ENCODE measurements at regions of chr7 and their contacts with region 1.

Region 1: DNA sequence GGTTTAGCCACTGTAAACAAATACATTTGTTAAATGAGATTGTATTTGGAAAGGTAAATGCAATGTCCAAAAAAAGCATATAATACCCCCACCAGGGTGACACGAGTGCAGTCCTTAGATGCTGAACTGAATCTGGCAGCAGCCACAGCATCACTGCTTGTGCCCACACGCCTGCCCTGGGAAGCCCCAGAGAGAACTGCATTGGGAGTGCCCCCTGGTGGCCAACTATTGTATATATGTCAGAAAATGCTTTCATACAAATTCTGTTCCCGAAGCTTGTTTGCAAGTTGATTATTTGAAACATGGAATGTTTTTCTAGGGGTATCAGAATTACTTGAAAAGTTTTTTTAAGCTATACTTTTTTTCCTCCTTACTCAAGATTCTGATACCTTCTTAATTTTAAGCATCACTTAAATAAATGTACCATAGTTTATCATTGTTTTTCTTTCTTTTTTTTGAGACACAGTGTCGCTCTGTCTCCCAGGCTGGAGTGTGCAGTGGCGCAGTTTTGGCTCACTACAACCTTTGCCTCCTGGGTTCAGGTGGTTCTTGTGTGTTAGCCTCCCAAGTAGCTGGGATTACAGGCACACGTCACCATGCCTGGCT is 50.1 kb downstream of the LANCL2 start:
- DNase-seq: peak; percentile 82
- H3K4me3 ChIP-seq: no peak overlapping the region
- H3K27ac ChIP-seq: no peak overlapping the region
- H3K4me1 ChIP-seq: no peaks in the 10 kb centered on the region
- H3K27me3 ChIP-seq: no peaks in the 10 kb centered on the region
- CTCF ChIP-seq: peak; percentile 80 to 86 (median 84)
- EP300 ChIP-seq: no peak
- POLR2A ChIP-seq: no peak

Region 2: GRCh38 chr7:54758702-54759592 is 656.3 kb before region 1 on chr7 and contains the start of gene SEC61G:
- in situ Hi-C with region 1: loop called in 2 of 4 experiments (anchors 25 kb)
- intact Hi-C with region 1: no loop called
- DNase-seq: peak; percentile 98
- H3K4me3 ChIP-seq: peak within 1 kb of the TSS; percentile 68 to 97 (median 94)
- H3K27ac ChIP-seq: peak within 1 kb of the TSS; percentile 86 to 91 (median 90)
- H3K4me1 ChIP-seq: peaks cover 6 to 35% (median 31%) of the 10 kb centered on the region in 4 donors
- H3K27me3 ChIP-seq: no peaks in the 10 kb centered on the region
- CTCF ChIP-seq: peak in 1 of 5 experiments; percentile 8
- EP300 ChIP-seq: no peak
- POLR2A ChIP-seq: peak; percentile 89
- total RNA-seq, gene SEC61G: 33.6 to 247 (median 134) TPM

Region 3: DNA sequence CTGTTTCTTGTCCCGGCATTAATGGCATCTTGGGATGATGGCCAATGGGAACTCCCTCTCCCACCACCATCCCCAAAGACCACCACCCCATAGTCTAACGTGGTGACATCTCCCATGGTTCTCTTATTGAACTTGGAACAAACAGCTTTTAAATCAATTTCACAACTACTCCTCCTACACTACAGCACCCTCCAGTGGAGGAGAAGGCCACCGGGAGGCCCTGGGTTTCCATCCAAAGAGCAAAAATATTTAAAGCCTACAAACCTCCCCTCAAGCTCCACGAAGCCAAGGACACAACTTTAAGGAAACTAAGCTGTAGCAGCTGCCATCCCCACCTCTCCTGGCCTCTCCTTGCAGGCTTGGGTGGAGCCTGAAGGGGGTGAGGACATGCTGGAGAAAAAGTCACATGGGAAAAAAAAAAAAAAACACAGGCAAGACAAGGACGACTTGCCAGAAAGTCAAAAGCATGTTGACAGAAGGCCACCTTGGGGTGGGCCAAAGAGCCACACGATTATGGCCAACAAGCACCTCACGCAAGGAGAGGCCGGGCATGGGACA is 144.1 kb before region 1 on chr7:
- in situ Hi-C with region 1: loop called in 2 of 4 experiments (anchors 10 to 25 kb)
- intact Hi-C with region 1: no loop called
- DNase-seq: no peak
- H3K4me3 ChIP-seq: no peak overlapping the region
- H3K27ac ChIP-seq: no peak overlapping the region
- H3K4me1 ChIP-seq: no peaks in the 10 kb centered on the region
- H3K27me3 ChIP-seq: no peaks in the 10 kb centered on the region
- CTCF ChIP-seq: no peak
- EP300 ChIP-seq: no peak
- POLR2A ChIP-seq: no peak

Region 4: GRCh38 chr7:55280031-55280454 is 135.2 kb before region 1 on chr7:
- in situ Hi-C with region 1: loop called in 3 of 4 experiments (anchors 10 to 25 kb)
- intact Hi-C with region 1: loop called (anchors 1 kb)
- DNase-seq: peak; percentile 65
- H3K4me3 ChIP-seq: no peak overlapping the region
- H3K27ac ChIP-seq: no peak overlapping the region
- H3K4me1 ChIP-seq: no peaks in the 10 kb centered on the region
- H3K27me3 ChIP-seq: no peaks in the 10 kb centered on the region
- CTCF ChIP-seq: peak; percentile 63 to 67 (median 65)
- EP300 ChIP-seq: no peak
- POLR2A ChIP-seq: no peak

Measured in transverse colon (tissue), 4 donors.